Caco-2 (cell line): ENCODE measurements at regions of chr13 and their contacts with region 1.

Region 1: GRCh38 chr13:79861731-79862130 is 380.8 kb downstream of the NDFIP2 start:
- DNase-seq: peak; percentile 90 to 95
- H3K4me3 ChIP-seq: no peak overlapping the region
- H3K4me3 Mint-ChIP-seq: peak overlapping the region; percentile 65
- H3K27ac Mint-ChIP-seq: peak overlapping the region; percentile 69
- H3K4me1 ChIP-seq: peaks cover 37% of the 10 kb centered on the region
- H3K4me1 Mint-ChIP-seq: peaks cover 45% of the 10 kb centered on the region
- H3K27me3 ChIP-seq: no peaks in the 10 kb centered on the region
- H3K27me3 Mint-ChIP-seq: no peaks in the 10 kb centered on the region
- CTCF ChIP-seq: no peak

Region 2: GRCh38 chr13:79695754-79696153 is 166.0 kb before region 1 on chr13:
- CTCF ChIA-PET with region 1: no interaction called
- POLR2A ChIA-PET with region 1: no interaction called
- intact Hi-C with region 1: loop called (anchors 5 kb)
- DNase-seq: no peak
- H3K4me3 ChIP-seq: no peak overlapping the region
- H3K4me3 Mint-ChIP-seq: no peak overlapping the region
- H3K27ac Mint-ChIP-seq: no peak overlapping the region
- H3K4me1 ChIP-seq: no peaks in the 10 kb centered on the region
- H3K4me1 Mint-ChIP-seq: no peaks in the 10 kb centered on the region
- H3K27me3 ChIP-seq: no peaks in the 10 kb centered on the region
- H3K27me3 Mint-ChIP-seq: peaks cover 4% of the 10 kb centered on the region
- CTCF ChIP-seq: no peak

Region 3: GRCh38 chr13:79724348-79725103 is 137.2 kb before region 1 on chr13:
- CTCF ChIA-PET with region 1: no interaction called
- POLR2A ChIA-PET with region 1: no interaction called
- intact Hi-C with region 1: loop called (anchors 1 kb)
- DNase-seq: peak; percentile 56 to 67
- H3K4me3 ChIP-seq: no peak overlapping the region
- H3K4me3 Mint-ChIP-seq: peak overlapping the region; percentile 58
- H3K27ac Mint-ChIP-seq: peak overlapping the region; percentile 28
- H3K4me1 ChIP-seq: peaks cover 25% of the 10 kb centered on the region
- H3K4me1 Mint-ChIP-seq: peaks cover 15% of the 10 kb centered on the region
- H3K27me3 ChIP-seq: no peaks in the 10 kb centered on the region
- H3K27me3 Mint-ChIP-seq: no peaks in the 10 kb centered on the region
- CTCF ChIP-seq: no peak

Region 4: GRCh38 chr13:79799059-79799867 is 62.5 kb before region 1 on chr13:
- CTCF ChIA-PET with region 1: no interaction called
- POLR2A ChIA-PET with region 1: no interaction called
- intact Hi-C with region 1: loop called (anchors 5 kb)
- DNase-seq: no peak
- H3K4me3 ChIP-seq: no peak overlapping the region
- H3K4me3 Mint-ChIP-seq: no peak overlapping the region
- H3K27ac Mint-ChIP-seq: no peak overlapping the region
- H3K4me1 ChIP-seq: peaks cover 52% of the 10 kb centered on the region
- H3K4me1 Mint-ChIP-seq: peaks cover 26% of the 10 kb centered on the region
- H3K27me3 ChIP-seq: no peaks in the 10 kb centered on the region
- H3K27me3 Mint-ChIP-seq: no peaks in the 10 kb centered on the region
- CTCF ChIP-seq: no peak

Region 5: DNA sequence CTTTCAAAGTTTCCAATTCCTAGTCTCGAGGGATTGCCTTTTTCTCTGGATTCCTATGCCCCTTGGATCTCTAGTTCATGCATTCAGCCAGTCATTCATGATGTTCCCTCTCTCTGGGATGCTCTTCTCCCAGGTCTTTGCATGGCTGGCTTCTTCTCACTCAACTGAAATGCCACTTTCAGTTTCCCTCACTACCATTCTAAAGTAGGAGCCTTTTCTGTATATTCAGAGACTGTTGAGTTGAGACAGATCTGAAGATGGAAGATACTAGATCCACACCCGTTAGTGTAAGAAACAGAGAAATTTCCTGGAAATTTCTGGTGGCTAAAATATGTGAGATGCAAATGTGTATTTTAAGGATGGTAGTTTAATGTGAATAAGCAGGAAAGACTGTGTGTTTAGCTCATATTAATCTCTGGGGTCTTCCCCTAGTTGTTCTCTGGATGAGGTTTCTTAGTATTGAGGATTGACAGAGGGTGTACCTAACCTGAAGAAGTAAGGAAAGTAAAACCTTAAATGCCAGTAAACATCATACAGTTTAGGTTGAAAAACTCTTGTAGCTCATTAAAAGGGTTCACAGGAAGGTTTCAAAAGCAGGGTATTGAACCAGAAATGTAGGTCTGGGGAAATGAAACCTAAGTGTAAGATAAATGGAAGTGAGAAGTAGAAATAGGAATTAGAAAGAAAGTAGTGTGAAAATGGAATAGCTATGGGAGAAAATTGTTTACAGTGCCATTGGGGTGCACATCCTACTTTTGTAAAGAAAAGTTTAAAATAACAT is 49.5 kb before region 1 on chr13:
- CTCF ChIA-PET with region 1: no interaction called
- POLR2A ChIA-PET with region 1: no interaction called
- intact Hi-C with region 1: loop called (anchors 5 kb)
- DNase-seq: no peak
- H3K4me3 ChIP-seq: no peak overlapping the region
- H3K4me3 Mint-ChIP-seq: no peak overlapping the region
- H3K27ac Mint-ChIP-seq: peak overlapping the region; percentile 88
- H3K4me1 ChIP-seq: peaks cover 29% of the 10 kb centered on the region
- H3K4me1 Mint-ChIP-seq: peaks cover 31% of the 10 kb centered on the region
- H3K27me3 ChIP-seq: no peaks in the 10 kb centered on the region
- H3K27me3 Mint-ChIP-seq: no peaks in the 10 kb centered on the region
- CTCF ChIP-seq: no peak

Region 6: DNA sequence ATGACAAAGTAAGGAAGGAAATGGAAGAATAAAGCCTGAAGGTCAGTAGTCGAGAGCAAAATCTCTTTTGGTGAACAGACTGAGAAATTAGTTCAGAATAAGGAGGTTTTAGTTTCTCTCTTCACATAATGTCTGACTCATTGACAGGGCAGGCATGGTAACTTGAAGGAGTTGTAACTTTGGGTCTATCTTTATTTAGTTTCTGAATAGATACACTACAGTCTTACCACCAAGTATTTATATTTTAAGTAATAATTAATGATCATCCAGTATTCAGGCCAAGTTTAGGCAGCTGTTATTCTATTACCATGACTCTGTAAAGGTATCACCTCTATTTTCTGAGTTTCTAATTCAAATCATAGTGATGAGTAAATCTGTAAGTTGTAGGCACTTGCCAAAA is 259.3 kb after region 1 on chr13:
- CTCF ChIA-PET with region 1: no interaction called
- POLR2A ChIA-PET with region 1: no interaction called
- intact Hi-C with region 1: loop called (anchors 1 kb)
- DNase-seq: no peak
- H3K4me3 ChIP-seq: no peak overlapping the region
- H3K4me3 Mint-ChIP-seq: no peak overlapping the region
- H3K27ac Mint-ChIP-seq: no peak overlapping the region
- H3K4me1 ChIP-seq: no peaks in the 10 kb centered on the region
- H3K4me1 Mint-ChIP-seq: no peaks in the 10 kb centered on the region
- H3K27me3 ChIP-seq: no peaks in the 10 kb centered on the region
- H3K27me3 Mint-ChIP-seq: no peaks in the 10 kb centered on the region
- CTCF ChIP-seq: no peak